ENCODE measurements at regions of chr11 and their contacts with region 1.

Region 1: DNA sequence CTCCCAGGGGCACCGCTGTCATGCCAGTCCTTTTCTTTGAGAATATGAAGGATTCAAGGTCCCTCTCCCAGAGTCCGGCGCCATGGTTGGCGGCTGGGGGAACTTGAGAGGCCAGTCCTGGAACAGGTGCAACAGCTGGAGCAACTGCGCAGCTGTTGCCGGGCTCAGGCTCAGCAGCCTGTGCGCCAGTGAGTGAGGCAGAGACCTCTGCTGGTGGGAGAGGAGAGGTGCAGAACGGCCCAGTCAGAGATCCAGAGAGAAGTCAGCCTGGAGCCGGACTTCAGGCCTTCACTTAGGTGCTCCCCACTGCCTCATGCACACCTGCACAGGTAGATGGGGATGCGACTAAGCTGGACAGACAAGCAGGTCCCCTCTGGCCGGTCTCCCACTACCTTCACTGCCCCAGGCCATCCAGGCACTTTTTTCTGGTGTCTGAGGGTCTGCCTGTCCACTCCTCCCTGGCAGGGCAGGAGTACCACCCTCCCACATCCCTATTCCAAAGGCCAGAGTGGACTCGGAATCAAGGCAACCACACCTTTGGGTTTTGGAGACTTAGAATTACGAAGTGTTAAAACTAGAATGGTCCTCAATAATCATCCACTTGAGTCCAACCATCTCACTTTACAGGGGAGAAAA is 4.6 kb downstream of the CHRDL2 start:
- DNase-seq: peak; percentile 60
- H3K4me3 ChIP-seq: no peak overlapping the region
- H3K27ac ChIP-seq: no peak overlapping the region
- H3K4me1 ChIP-seq: no peaks in the 10 kb centered on the region
- H3K27me3 ChIP-seq: peaks cover 61 to 66% of the 10 kb centered on the region in 2 experiments
- CTCF ChIP-seq: peak; percentile 80 to 97
- POLR2A ChIP-seq: no peak

Region 2: DNA sequence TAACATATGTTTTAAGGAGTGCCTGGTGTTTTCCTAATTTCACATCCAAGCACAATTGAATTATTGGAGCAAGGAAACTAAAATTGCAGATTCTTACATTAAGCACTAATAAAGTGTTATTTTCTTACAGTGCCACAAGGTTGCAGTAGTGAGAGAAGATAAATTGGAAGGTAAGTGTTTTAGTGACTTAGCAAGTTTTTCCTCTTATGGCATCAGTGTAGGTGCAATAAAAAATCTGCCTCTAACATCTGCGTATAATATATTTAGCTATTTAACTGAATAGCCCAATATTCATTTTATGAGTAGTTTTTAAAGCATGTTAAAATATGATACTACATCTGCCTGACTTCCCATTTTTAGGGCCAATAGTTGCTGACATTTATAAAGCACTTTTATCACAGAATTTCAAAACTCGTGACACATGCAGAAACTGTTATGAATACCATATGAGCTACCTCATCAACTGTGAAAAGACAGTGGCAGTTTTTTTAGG is 115.2 kb before region 1 on chr11:
- CTCF ChIA-PET with region 1: interaction called, 16 read pairs
- POLR2A ChIA-PET with region 1: no interaction called
- dilution Hi-C with region 1: no loop called
- intact Hi-C with region 1: loop called (anchors 2 kb)
- DNase-seq: peak; percentile 46
- H3K4me3 ChIP-seq: no peak overlapping the region
- H3K27ac ChIP-seq: no peak overlapping the region
- H3K4me1 ChIP-seq: no peaks in the 10 kb centered on the region
- H3K27me3 ChIP-seq: no peaks in the 10 kb centered on the region
- CTCF ChIP-seq: peak in 1 of 2 donors; percentile 26
- POLR2A ChIP-seq: no peak

Region 3: DNA sequence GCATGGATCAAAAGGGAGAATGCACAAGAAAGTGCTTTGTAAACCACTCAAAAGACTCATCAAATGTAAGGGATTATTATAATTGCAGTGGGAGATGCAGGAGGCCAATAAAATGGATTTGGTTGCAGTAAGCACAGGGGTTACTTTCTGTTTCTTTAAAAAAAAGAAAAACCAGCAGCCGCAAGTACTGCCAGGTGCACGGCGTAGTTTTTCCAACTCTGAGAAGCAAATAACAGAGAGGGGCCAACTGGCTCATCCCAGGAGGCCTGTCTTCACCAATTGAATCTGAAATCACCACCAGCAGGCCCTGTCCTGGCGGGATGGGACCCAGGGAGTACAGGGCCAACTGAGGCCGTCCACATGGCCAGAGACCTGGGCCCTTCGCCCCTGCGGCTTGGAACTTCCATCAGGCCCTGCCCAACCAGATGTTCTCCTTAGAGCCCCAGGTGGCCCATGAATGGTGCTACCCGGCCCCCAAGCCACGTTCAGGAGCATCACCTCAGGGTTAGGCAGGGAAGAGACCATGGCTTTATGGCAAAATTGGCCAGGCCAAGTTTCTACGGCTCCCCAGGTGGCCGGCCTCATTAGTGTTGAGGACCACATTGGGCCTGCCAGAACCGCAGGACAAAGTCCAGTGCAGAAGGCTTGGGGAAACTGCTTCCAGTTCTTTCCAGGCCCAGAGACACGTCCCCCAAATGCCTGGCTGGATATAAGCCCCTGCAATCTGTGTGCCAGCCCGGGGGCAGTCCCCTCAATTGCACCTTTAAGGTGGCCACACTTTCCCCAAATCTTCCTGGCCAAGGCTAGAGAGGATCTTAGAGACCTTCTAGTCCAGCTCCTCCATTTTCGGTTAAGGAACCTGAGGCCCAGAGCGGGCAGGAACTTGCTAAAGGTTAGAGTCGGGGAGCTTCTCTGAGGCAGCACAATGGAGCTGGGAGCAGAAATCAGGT is 57.2 kb before region 1 on chr11:
- CTCF ChIA-PET with region 1: no interaction called
- POLR2A ChIA-PET with region 1: no interaction called
- dilution Hi-C with region 1: no loop called
- intact Hi-C with region 1: no loop called
- DNase-seq: no peak
- H3K4me3 ChIP-seq: no peak overlapping the region
- H3K27ac ChIP-seq: no peak overlapping the region
- H3K4me1 ChIP-seq: no peaks in the 10 kb centered on the region
- H3K27me3 ChIP-seq: no peaks in the 10 kb centered on the region
- CTCF ChIP-seq: no peak
- POLR2A ChIP-seq: no peak

Region 4: DNA sequence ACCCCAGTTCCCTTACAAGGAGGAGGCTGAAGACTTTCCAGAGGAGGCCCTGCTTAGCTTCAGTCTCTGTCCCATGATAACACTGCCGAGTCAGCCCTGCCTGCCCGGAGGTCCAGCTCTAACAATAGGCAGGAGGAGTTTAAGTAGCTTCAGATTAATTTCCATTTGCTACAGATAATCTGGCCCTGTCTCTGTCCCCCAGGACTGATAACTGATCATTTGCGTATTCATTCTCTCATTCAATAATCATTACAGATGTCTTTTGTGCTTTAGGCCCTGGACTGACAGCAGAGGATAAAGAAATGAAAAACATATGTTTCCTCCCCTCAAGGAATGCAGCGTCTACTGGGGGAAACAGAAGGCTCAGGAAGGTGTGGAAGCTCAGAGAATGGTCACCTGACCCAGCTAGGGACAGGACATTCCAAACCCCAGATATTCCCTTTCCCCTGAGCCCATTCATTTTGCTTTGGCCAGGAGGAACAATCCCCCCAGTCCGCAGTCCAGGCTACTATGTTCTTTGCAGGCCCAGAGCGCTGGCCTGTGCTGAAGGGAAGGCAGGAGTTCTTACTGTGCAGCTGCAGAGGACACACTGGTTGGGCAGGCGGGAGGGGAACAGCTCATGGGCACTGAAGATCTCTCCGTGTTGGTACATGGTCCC is 16.3 kb before region 1 on chr11:
- CTCF ChIA-PET with region 1: interaction called, 191 read pairs
- POLR2A ChIA-PET with region 1: no interaction called
- dilution Hi-C with region 1: no loop called
- intact Hi-C with region 1: no loop called
- DNase-seq: peak; percentile 26
- H3K4me3 ChIP-seq: no peak overlapping the region
- H3K27ac ChIP-seq: no peak overlapping the region
- H3K4me1 ChIP-seq: no peaks in the 10 kb centered on the region
- H3K27me3 ChIP-seq: peaks cover 0 to 2% of the 10 kb centered on the region in 2 experiments
- CTCF ChIP-seq: no peak
- POLR2A ChIP-seq: no peak

Region 5: GRCh38 chr11:74870485-74870884 is 143.8 kb after region 1 on chr11:
- CTCF ChIA-PET with region 1: interaction called, 8 read pairs
- POLR2A ChIA-PET with region 1: no interaction called
- dilution Hi-C with region 1: loop called (anchors 25 kb)
- intact Hi-C with region 1: loop called (anchors 1 kb)
- DNase-seq: peak; percentile 49
- H3K4me3 ChIP-seq: no peak overlapping the region
- H3K27ac ChIP-seq: no peak overlapping the region
- H3K4me1 ChIP-seq: no peaks in the 10 kb centered on the region
- H3K27me3 ChIP-seq: no peaks in the 10 kb centered on the region
- CTCF ChIP-seq: peak; percentile 39 to 45
- POLR2A ChIP-seq: no peak